ENCODE measurements at regions of chr15 and their contacts with region 1.

Region 1: DNA sequence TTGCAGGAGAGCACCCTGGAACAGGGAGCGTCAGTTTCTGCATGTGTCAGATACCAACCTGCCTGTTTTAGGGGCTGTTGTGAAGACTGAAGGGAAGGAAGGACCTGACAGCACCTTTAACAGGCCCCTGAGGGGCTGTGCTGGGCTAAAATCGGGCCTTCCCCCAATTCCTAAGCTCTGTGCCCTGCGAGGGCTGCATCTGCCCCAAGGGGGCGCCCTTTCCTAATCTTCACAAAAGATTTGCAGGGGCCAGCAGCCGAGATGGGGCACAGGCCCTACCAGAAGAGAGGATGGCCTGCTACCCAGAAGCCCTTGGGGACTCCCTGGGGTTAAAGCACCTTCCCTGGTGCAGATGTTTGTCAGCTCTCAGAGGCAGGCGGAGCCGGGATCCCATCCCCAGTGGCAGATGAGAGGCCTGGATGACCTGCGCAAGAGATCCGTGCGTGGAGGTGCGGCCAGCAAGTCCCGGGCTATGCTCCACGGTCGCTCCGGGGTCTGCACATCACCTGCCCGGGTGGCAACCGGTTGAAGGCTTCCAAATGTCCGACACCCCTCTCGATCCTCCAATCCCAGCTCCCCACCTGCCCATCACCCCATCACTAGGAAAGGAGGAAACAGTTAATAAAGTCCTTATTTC is 53.6 kb downstream of the RHCG start:
- DNase-seq: no peak
- ATAC-seq: peak; percentile 70
- H3K4me3 ChIP-seq: no peak overlapping the region
- H3K27ac ChIP-seq: no peak overlapping the region
- H3K4me1 ChIP-seq: peaks cover 17% of the 10 kb centered on the region
- H3K27me3 ChIP-seq: no peaks in the 10 kb centered on the region
- CTCF ChIP-seq: peak; percentile 56 to 72 (median 71)
- EP300 ChIP-seq: no peak
- POLR2A ChIP-seq: no peak
- RAD21 ChIP-seq: peak; percentile 56

Region 2: GRCh38 chr15:89342840-89343239 is 99.9 kb before region 1 on chr15:
- CTCF ChIA-PET with region 1: no interaction called
- POLR2A ChIA-PET with region 1: no interaction called
- RAD21 ChIA-PET with region 1: no interaction called
- SMC1A ChIA-PET with region 1: no interaction called
- in situ Hi-C with region 1: no loop called
- intact Hi-C with region 1: no loop called
- DNase-seq: no peak
- ATAC-seq: no peak
- H3K4me3 ChIP-seq: no peak overlapping the region
- H3K27ac ChIP-seq: no peak overlapping the region
- H3K4me1 ChIP-seq: no peaks in the 10 kb centered on the region
- H3K27me3 ChIP-seq: peaks cover 0 to 4% of the 10 kb centered on the region in 2 experiments; a peak in 3 of 4 replicates
- CTCF ChIP-seq: no peak
- EP300 ChIP-seq: no peak
- POLR2A ChIP-seq: no peak
- RAD21 ChIP-seq: no peak

Region 3: GRCh38 chr15:89430530-89431341 is 12.1 kb before region 1 on chr15:
- CTCF ChIA-PET with region 1: interaction called, 45 read pairs
- POLR2A ChIA-PET with region 1: interaction called, 3 read pairs
- RAD21 ChIA-PET with region 1: interaction called, 5 read pairs
- SMC1A ChIA-PET with region 1: interaction called, 7 read pairs
- in situ Hi-C with region 1: no loop called
- intact Hi-C with region 1: no loop called
- DNase-seq: peak; percentile 31
- ATAC-seq: peak; percentile 99
- H3K4me3 ChIP-seq: peak overlapping the region; percentile 69
- H3K27ac ChIP-seq: no peak overlapping the region
- H3K4me1 ChIP-seq: peaks cover 2% of the 10 kb centered on the region; the same call in 1 of the 2 replicates
- H3K27me3 ChIP-seq: no peaks in the 10 kb centered on the region
- CTCF ChIP-seq: peak; percentile 93 to 94 (median 94); a peak in 5 of 6 replicates
- EP300 ChIP-seq: no peak
- POLR2A ChIP-seq: peak; percentile 42; the same call in 1 of the 2 replicates
- RAD21 ChIP-seq: peak; percentile 73

Region 4: DNA sequence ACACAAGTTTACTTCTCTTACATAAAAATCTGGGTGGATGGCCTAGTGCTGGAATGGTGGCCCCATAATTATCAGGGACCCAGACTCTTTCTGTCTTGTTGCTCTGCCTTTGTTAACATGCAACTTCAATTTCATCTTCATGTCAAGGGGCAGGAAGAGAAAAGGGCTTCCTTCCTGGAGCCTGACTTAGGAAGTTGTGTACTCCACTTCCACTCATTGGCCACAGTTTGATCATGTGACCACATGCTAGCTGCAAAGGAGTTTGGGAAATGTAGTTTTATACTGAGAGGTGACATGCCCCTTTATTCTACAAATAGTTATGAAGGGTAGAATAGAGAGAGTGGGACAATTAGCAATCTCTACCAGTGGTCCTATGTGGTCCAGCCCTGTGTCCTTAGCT is 14.3 kb after region 1 on chr15:
- CTCF ChIA-PET with region 1: interaction called, 58 read pairs
- POLR2A ChIA-PET with region 1: no interaction called
- RAD21 ChIA-PET with region 1: interaction called, 3 read pairs
- SMC1A ChIA-PET with region 1: interaction called, 5 read pairs
- in situ Hi-C with region 1: no loop called
- intact Hi-C with region 1: no loop called
- DNase-seq: no peak
- ATAC-seq: peak; percentile 81
- H3K4me3 ChIP-seq: no peak overlapping the region
- H3K27ac ChIP-seq: no peak overlapping the region
- H3K4me1 ChIP-seq: no peaks in the 10 kb centered on the region
- H3K27me3 ChIP-seq: no peaks in the 10 kb centered on the region
- CTCF ChIP-seq: no peak
- EP300 ChIP-seq: no peak
- POLR2A ChIP-seq: no peak
- RAD21 ChIP-seq: no peak